Activated CD4-positive, alpha-beta memory T cell treated with anti-CD3 and anti-CD28 coated beads for 36 hours (primary cell): ENCODE measurements at regions of chr2 and their contacts with region 1.

Region 1: DNA sequence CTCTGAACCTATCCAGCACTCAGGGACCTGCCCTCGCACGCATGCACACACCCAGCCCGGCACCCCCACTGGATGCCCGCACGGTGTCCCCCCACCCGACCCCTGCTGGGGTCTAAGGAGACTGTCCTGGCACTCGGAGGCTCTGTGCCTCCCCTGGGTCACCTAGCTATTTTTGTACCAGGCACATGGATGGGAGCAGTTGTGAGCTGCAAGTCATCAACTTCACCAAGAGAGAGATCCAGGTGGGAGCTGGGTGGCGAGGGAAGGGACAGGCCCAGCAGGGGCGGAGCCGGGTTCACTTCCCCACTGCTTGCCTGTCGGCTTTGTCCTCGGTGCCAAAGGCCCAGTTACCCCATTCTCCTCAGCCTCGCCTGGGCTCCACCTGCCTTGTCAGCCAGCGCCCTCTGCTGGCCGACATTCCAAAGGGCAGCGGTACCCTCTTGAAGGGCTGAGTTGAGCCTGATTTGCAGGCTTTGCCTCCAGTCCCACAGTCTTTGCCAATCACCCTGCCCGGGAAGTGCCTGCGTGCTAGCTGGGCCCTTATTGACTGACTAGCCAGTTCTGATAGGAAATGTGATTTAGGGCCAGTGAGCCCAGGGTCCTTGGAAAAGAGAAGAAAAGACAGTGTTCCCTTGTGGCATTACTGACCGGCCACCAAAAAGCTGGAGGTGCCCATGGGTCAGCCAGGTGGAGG is 5.8 kb downstream of the NT5DC4 start:
- DNase-seq: peak; percentile 93
- H3K4me3 Mint-ChIP-seq: no peak overlapping the region
- H3K27ac Mint-ChIP-seq: no peak overlapping the region
- H3K4me1 Mint-ChIP-seq: no peaks in the 10 kb centered on the region
- H3K27me3 Mint-ChIP-seq: no peaks in the 10 kb centered on the region

Region 2: GRCh38 chr2:112606488-112606902 is 120.1 kb before region 1 on chr2:
- CTCF ChIA-PET with region 1: interaction called, 193 read pairs
- POLR2A ChIA-PET with region 1: no interaction called
- intact Hi-C with region 1: no loop called
- DNase-seq: no peak
- H3K4me3 Mint-ChIP-seq: no peak overlapping the region
- H3K27ac Mint-ChIP-seq: no peak overlapping the region
- H3K4me1 Mint-ChIP-seq: no peaks in the 10 kb centered on the region
- H3K27me3 Mint-ChIP-seq: no peaks in the 10 kb centered on the region

Region 3: GRCh38 chr2:112666764-112667122 is 59.9 kb before region 1 on chr2:
- CTCF ChIA-PET with region 1: interaction called, 16 read pairs
- POLR2A ChIA-PET with region 1: no interaction called
- intact Hi-C with region 1: no loop called
- DNase-seq: no peak
- H3K4me3 Mint-ChIP-seq: no peak overlapping the region
- H3K27ac Mint-ChIP-seq: no peak overlapping the region
- H3K4me1 Mint-ChIP-seq: peaks cover 2% of the 10 kb centered on the region
- H3K27me3 Mint-ChIP-seq: no peaks in the 10 kb centered on the region

Region 4: DNA sequence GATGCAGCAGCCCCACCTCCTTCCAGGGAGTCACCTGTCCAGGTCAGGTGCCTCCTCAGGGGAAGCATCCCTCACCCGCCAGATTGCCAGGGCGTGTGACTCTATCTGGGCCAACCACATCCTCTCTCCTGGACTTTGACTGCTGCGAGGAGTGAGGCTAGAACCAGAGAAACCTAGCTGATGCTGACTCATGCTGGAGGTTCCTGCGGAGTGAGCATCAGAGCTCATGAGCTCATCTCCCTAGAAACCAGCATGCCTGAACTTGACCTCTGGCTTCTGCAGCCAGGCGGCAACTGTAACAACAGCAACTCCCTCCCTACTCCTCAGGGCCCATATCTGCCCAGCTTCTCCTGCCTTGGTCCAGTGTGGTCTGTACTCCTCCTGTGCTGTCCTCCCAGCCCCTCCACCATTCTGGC is 34.1 kb before region 1 on chr2:
- CTCF ChIA-PET with region 1: interaction called, 58 read pairs
- POLR2A ChIA-PET with region 1: interaction called, 3 read pairs
- intact Hi-C with region 1: loop called (anchors 2 kb)
- DNase-seq: peak; percentile 87
- H3K4me3 Mint-ChIP-seq: peak overlapping the region; percentile 30
- H3K27ac Mint-ChIP-seq: peak overlapping the region; percentile 84
- H3K4me1 Mint-ChIP-seq: peaks cover 33% of the 10 kb centered on the region
- H3K27me3 Mint-ChIP-seq: no peaks in the 10 kb centered on the region

Region 5: GRCh38 chr2:112737542-112738232 is 11.0 kb after region 1 on chr2:
- CTCF ChIA-PET with region 1: interaction called, 28 read pairs
- POLR2A ChIA-PET with region 1: no interaction called
- intact Hi-C with region 1: no loop called
- DNase-seq: no peak
- H3K4me3 Mint-ChIP-seq: no peak overlapping the region
- H3K27ac Mint-ChIP-seq: no peak overlapping the region
- H3K4me1 Mint-ChIP-seq: peaks cover 7% of the 10 kb centered on the region
- H3K27me3 Mint-ChIP-seq: no peaks in the 10 kb centered on the region

Region 6: DNA sequence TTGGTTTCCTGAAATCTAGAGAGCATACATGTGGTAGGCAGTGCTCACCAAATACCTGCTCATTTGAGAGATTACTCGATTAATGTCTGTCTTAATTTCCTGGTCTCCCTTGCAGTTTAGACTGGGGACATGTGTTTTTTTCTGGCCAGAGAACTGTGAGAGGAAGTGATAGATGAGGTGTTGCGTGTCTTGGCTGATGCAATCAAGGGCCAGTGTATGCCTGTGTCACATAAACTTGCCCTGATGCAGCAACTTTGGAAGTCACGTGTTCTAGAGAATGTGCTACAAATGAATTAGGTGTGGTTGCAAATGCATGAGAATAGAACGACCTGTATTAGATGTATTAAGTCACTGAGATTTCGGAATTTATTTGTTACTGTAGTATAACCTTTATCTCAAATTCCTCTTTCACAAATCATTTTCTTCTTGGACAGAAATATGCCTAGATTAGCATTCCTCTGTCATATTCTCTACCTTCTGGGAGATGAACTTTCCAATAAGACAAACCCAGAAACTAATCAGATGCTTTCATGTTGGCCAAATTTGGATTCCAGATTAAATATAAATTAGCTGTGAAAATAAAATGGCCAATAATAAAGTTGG is 67.6 kb after region 1 on chr2:
- CTCF ChIA-PET with region 1: no interaction called
- POLR2A ChIA-PET with region 1: no interaction called
- intact Hi-C with region 1: no loop called
- DNase-seq: peak; percentile 74
- H3K4me3 Mint-ChIP-seq: peak overlapping the region; percentile 18
- H3K27ac Mint-ChIP-seq: peak overlapping the region; percentile 85
- H3K4me1 Mint-ChIP-seq: peaks cover 27% of the 10 kb centered on the region
- H3K27me3 Mint-ChIP-seq: no peaks in the 10 kb centered on the region

Region 7: DNA sequence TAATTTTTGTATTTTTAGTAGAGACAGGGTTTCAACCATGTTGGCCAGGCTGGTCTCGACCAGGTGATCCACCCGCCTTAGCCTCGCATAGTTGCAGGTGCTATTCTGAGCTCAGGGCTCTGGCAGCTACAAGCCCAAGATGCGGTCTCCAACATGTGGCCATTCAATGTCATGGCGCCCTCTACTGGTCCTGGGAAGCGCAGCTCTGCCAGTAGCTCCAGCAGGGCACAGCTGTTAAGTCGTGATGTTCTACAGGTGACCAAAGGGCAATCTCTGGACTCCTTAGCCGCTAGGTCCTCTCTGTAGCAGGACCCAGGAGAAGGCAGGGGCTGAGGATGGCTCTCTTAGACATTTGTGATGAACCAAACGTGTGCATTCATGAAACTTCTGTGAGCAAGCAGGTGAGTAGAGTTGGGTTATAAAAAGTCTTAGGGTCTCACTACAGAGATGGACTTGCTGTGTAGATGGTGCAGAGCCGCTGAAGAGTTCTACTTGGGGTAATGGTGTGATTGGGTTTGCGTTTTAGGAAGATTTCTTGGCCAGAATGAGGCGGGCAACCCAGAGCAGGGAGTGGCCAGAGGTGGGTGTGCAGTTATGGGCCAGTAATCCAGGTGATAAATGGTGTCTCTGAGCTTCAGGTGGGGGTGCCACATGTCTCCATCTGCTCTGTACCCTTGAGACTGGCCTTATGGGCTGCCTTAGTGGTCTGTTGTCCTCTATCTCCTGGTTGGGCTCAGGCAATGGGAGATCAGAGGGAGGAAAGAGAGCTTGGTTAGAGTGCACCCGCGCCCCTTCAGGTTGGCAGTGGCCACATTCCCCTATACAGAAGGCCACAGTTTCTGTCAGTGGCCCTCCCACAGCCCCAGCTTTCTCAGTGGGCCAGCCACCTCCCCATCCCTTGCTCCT is 215.4 kb after region 1 on chr2:
- CTCF ChIA-PET with region 1: interaction called, 41 read pairs
- POLR2A ChIA-PET with region 1: no interaction called
- intact Hi-C with region 1: no loop called
- DNase-seq: peak; percentile 85
- H3K4me3 Mint-ChIP-seq: no peak overlapping the region
- H3K27ac Mint-ChIP-seq: no peak overlapping the region
- H3K4me1 Mint-ChIP-seq: no peaks in the 10 kb centered on the region
- H3K27me3 Mint-ChIP-seq: no peaks in the 10 kb centered on the region